Activated CD4-positive, alpha-beta memory T cell treated with anti-CD3 and anti-CD28 coated beads for 36 hours (primary cell): ENCODE measurements at regions of chr13 and their contacts with region 1.

Region 1: GRCh38 chr13:78934336-78934735 is 275.4 kb upstream of the OBI1 start:
- DNase-seq: no peak
- H3K4me3 Mint-ChIP-seq: no peak overlapping the region
- H3K27ac Mint-ChIP-seq: no peak overlapping the region
- H3K4me1 Mint-ChIP-seq: no peaks in the 10 kb centered on the region
- H3K27me3 Mint-ChIP-seq: no peaks in the 10 kb centered on the region

Region 2: GRCh38 chr13:79246578-79246949 is 312.2 kb after region 1 on chr13:
- CTCF ChIA-PET with region 1: no interaction called
- POLR2A ChIA-PET with region 1: no interaction called
- intact Hi-C with region 1: no loop called
- DNase-seq: no peak
- H3K4me3 Mint-ChIP-seq: no peak overlapping the region
- H3K27ac Mint-ChIP-seq: no peak overlapping the region
- H3K4me1 Mint-ChIP-seq: no peaks in the 10 kb centered on the region
- H3K27me3 Mint-ChIP-seq: peaks cover 2% of the 10 kb centered on the region

Region 3: GRCh38 chr13:79775830-79776229 is 841.5 kb after region 1 on chr13:
- CTCF ChIA-PET with region 1: no interaction called
- POLR2A ChIA-PET with region 1: no interaction called
- intact Hi-C with region 1: loop called (anchors 5 kb)
- DNase-seq: no peak
- H3K4me3 Mint-ChIP-seq: no peak overlapping the region
- H3K27ac Mint-ChIP-seq: no peak overlapping the region
- H3K4me1 Mint-ChIP-seq: no peaks in the 10 kb centered on the region
- H3K27me3 Mint-ChIP-seq: no peaks in the 10 kb centered on the region